Activated CD4-positive, alpha-beta memory T cell treated with anti-CD3 and anti-CD28 coated beads for 36 hours (primary cell): ENCODE measurements at regions of chr17 and their contacts with region 1.

Region 1: DNA sequence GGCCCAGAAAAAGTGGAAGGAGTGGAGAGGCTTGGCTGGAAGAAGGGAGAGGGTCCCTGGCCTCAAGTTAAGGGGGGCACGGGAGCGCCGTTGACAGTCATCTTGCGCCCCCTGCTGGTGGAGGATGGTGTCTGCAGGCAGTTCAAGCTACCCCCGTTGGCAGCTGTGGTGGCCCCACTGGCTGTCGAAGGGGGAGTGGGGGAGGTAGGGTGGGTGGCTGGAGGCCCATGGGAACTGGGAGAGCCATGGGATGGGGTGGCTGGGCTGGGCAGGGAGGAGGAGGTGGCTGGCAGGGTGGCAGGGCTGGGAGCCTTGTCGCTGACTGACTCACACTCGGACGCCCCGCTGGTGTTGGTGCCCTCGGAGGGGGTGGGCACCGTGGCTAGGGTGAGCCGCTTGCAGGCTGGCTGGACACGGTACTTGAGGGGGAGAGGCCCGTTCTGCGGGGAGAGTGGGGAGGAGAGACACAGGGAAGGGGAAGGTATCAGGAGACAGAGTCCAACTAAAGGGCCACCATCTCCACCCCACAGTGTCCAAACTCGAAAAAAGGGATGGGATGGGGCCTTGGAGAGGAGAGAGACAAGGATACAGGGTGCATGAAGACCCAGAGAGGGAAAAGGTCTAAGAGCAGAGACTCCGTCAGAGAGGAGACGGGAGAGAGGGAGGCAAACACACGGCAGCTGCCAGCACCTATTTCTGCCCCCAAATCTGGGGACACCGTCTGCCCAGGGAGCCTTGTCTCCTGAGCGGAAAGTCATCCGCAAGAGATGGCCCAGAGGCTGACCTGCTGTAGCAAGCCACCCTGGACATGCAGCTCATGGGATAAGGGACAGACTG is 5.2 kb downstream of the CISD3 start:
- DNase-seq: peak; percentile 78
- H3K4me3 Mint-ChIP-seq: no peak overlapping the region
- H3K27ac Mint-ChIP-seq: no peak overlapping the region
- H3K4me1 Mint-ChIP-seq: peaks cover 42% of the 10 kb centered on the region
- H3K27me3 Mint-ChIP-seq: peaks cover 6% of the 10 kb centered on the region

Region 2: DNA sequence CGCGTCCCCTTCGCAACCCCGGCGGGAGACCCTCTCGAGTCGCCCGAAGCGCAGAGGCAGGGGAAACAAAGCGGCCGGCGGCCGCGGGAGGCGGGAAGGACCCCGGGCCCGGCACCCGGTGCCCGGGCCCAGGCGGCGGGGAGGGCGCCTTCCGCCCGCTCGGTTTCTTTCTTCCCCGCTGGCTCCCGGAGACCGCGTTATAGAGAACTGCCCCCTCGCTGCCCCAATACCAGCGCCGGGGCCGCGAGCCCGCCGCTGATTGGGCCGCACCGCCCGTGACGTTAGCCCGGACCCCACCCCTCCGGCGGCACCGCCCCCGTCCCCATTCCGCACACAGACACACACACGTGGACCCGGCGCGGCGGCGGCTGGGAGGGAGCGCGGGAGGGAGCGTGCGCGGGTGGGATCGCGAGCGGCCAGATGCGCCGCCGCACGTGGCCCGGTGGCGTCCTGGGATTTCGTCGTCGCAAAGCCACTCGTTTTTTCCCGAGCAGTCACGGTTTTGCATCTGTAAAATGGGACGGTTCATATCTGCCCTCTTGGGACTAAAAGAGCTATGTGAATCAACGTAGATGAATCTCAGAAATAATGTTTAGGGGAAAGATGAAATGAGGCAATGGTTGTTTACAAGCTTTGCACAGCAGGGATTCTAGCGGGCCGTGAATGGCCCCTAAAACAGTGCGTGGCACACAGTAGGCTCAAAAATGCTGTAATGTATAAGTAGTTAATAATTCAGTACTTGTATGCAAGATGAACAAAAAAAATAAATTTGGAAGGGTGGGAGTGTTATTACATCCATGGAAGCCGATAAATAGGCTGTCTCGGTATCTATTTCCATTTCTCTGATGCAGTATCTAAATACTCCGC is 60.4 kb before region 1 on chr17 and contains the start of gene EPOP:
- CTCF ChIA-PET with region 1: interaction called, 210 read pairs
- POLR2A ChIA-PET with region 1: interaction called, 10 read pairs
- intact Hi-C with region 1: loop called (anchors 1 kb)
- DNase-seq: peak; percentile 94
- H3K4me3 Mint-ChIP-seq: peak within 1 kb of the TSS; percentile 62
- H3K27ac Mint-ChIP-seq: peak within 1 kb of the TSS; percentile 93
- H3K4me1 Mint-ChIP-seq: peaks cover 46% of the 10 kb centered on the region
- H3K27me3 Mint-ChIP-seq: peaks cover 10% of the 10 kb centered on the region
- total RNA-seq, gene EPOP: 37.1 to 38.0 TPM

Region 3: DNA sequence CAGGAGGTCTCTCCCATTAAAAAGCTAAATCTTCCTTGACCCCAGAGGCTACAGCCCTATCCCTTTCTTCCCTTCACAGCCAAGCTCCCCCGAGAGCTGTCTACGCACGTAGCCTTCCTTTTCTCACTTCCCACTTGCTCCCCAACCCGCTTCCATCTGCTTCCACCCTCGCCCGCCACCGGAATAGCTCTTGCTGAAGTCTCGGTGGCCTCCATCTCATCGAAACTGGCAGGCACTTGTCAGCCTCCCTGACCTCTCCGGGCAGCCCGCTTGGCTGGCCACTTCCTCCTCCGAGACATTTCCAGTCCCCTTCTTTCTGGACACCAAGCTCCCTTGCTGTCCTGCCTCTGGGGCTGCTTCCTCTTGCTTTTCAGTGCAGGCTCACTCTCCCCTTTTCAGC is 49.9 kb before region 1 on chr17:
- CTCF ChIA-PET with region 1: interaction called, 210 read pairs
- POLR2A ChIA-PET with region 1: no interaction called
- intact Hi-C with region 1: no loop called
- DNase-seq: no peak
- H3K4me3 Mint-ChIP-seq: no peak overlapping the region
- H3K27ac Mint-ChIP-seq: no peak overlapping the region
- H3K4me1 Mint-ChIP-seq: peaks cover 5% of the 10 kb centered on the region
- H3K27me3 Mint-ChIP-seq: no peaks in the 10 kb centered on the region

Region 4: GRCh38 chr17:38709864-38710603 is 25.3 kb before region 1 on chr17:
- CTCF ChIA-PET with region 1: interaction called, 32 read pairs
- POLR2A ChIA-PET with region 1: interaction called, 116 read pairs
- intact Hi-C with region 1: no loop called
- DNase-seq: no peak
- H3K4me3 Mint-ChIP-seq: no peak overlapping the region
- H3K27ac Mint-ChIP-seq: peak overlapping the region; percentile 42
- H3K4me1 Mint-ChIP-seq: peaks cover 66% of the 10 kb centered on the region
- H3K27me3 Mint-ChIP-seq: no peaks in the 10 kb centered on the region

Region 5: GRCh38 chr17:38717139-38717745 is 18.1 kb before region 1 on chr17:
- CTCF ChIA-PET with region 1: interaction called, 10 read pairs
- POLR2A ChIA-PET with region 1: interaction called, 4 read pairs
- intact Hi-C with region 1: no loop called
- DNase-seq: no peak
- H3K4me3 Mint-ChIP-seq: no peak overlapping the region
- H3K27ac Mint-ChIP-seq: peak overlapping the region; percentile 1
- H3K4me1 Mint-ChIP-seq: peaks cover 48% of the 10 kb centered on the region
- H3K27me3 Mint-ChIP-seq: no peaks in the 10 kb centered on the region

Region 6: GRCh38 chr17:38752119-38752929 is 16.9 kb after region 1 on chr17 and contains the start of gene PSMB3:
- CTCF ChIA-PET with region 1: interaction called, 39 read pairs
- POLR2A ChIA-PET with region 1: interaction called, 9 read pairs
- intact Hi-C with region 1: loop called (anchors 2 kb)
- DNase-seq: peak; percentile 99
- H3K4me3 Mint-ChIP-seq: peak within 1 kb of the TSS; percentile 92
- H3K27ac Mint-ChIP-seq: peak within 1 kb of the TSS; percentile 94
- H3K4me1 Mint-ChIP-seq: peaks cover 40% of the 10 kb centered on the region
- H3K27me3 Mint-ChIP-seq: peaks cover 27% of the 10 kb centered on the region
- total RNA-seq, gene PSMB3: 335 to 348 TPM

Region 7: GRCh38 chr17:38809828-38810227 is 74.4 kb after region 1 on chr17:
- CTCF ChIA-PET with region 1: no interaction called
- POLR2A ChIA-PET with region 1: no interaction called
- intact Hi-C with region 1: no loop called
- DNase-seq: no peak
- H3K4me3 Mint-ChIP-seq: no peak overlapping the region
- H3K27ac Mint-ChIP-seq: no peak overlapping the region
- H3K4me1 Mint-ChIP-seq: no peaks in the 10 kb centered on the region
- H3K27me3 Mint-ChIP-seq: no peaks in the 10 kb centered on the region

Region 8: DNA sequence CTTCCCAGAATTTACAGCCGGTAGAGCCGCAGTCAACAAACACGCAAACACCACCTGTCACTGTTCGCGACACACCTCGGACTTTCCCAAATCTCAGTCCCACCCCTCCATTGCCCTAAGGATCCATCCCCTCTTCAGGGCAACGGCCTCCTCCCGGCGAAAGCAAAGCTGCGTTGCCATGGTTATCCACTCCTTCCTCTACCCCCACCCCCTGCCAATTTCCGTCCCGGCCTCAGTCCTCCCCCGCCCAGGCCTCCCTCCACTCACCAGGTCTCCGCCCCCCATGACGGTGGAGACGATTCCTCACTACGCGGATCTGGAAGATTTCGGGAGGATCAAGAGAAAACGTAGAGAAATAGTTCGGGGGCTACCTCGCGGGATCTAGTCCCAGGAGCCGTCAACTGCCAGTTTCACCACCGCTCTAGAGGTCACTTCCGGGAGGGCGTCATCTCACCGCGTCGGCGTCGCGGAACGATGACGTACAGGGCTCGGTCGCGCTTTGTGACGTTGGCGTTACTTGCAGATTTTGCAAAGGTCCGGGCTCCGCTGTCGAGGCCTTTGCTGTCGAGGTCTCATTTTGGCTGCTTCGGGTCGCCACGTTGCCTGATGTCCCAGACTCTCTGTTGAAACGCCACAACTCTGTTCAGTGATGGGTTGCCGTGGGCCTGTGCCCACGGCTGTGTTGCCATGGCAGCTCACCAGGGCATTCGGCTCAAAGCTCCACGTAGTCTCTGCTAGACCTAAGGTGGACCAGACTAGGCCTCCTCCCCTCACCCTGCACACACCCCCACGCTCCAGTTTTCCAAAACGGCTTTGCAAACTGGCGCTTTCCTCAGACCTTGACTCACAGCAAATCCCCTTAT is 89.8 kb after region 1 on chr17 and contains the start of gene CWC25:
- CTCF ChIA-PET with region 1: no interaction called
- POLR2A ChIA-PET with region 1: no interaction called
- intact Hi-C with region 1: no loop called
- DNase-seq: peak; percentile 98
- H3K4me3 Mint-ChIP-seq: peak within 1 kb of the TSS; percentile 98
- H3K27ac Mint-ChIP-seq: peak within 1 kb of the TSS; percentile 99
- H3K4me1 Mint-ChIP-seq: peaks cover 26% of the 10 kb centered on the region
- H3K27me3 Mint-ChIP-seq: no peaks in the 10 kb centered on the region
- total RNA-seq, gene CWC25: 21.1 to 21.5 TPM

Region 9: GRCh38 chr17:38922538-38923297 is 187.3 kb after region 1 on chr17:
- CTCF ChIA-PET with region 1: no interaction called
- POLR2A ChIA-PET with region 1: no interaction called
- intact Hi-C with region 1: no loop called
- DNase-seq: peak; percentile 10
- H3K4me3 Mint-ChIP-seq: no peak overlapping the region
- H3K27ac Mint-ChIP-seq: no peak overlapping the region
- H3K4me1 Mint-ChIP-seq: peaks cover 36% of the 10 kb centered on the region
- H3K27me3 Mint-ChIP-seq: no peaks in the 10 kb centered on the region